CD4-positive, alpha-beta memory T cell (primary cell): ENCODE measurements at regions of chr7 and their contacts with region 1.

Region 1: DNA sequence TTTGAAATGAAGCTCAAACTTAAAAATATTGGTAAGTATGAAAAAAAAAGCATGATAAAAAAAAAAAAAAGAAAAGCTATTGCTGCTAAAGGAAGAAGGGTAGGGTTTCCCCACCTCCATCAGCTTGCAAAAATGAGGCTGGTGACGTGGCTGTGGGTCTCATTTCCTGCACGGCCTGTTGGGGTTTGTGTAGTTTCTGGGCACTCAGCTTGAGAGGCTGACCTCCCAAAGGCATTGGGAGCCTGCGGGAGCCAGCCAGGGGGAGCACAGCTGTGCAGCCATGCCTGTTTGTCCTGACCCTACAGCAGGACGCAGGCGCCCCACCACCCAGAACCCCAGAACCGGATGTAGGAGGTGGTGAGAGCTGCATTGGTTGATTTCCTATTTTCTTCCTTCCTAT is 48.8 kb upstream of the CARD11 start:
- DNase-seq: peak; percentile 78 to 91 (median 82)
- H3K4me3 ChIP-seq: no peak overlapping the region
- H3K4me3 Mint-ChIP-seq: peak overlapping the region; percentile 38 to 80 (median 71)
- H3K27ac ChIP-seq: peak overlapping the region; percentile 70
- H3K27ac Mint-ChIP-seq: peak overlapping the region; percentile 92 to 97 (median 95)
- H3K4me1 ChIP-seq: peaks cover 79% of the 10 kb centered on the region
- H3K4me1 Mint-ChIP-seq: peaks cover 47 to 86% (median 66%) of the 10 kb centered on the region in 4 donors
- H3K27me3 ChIP-seq: no peaks in the 10 kb centered on the region
- H3K27me3 Mint-ChIP-seq: no peaks in the 10 kb centered on the region

Region 2: DNA sequence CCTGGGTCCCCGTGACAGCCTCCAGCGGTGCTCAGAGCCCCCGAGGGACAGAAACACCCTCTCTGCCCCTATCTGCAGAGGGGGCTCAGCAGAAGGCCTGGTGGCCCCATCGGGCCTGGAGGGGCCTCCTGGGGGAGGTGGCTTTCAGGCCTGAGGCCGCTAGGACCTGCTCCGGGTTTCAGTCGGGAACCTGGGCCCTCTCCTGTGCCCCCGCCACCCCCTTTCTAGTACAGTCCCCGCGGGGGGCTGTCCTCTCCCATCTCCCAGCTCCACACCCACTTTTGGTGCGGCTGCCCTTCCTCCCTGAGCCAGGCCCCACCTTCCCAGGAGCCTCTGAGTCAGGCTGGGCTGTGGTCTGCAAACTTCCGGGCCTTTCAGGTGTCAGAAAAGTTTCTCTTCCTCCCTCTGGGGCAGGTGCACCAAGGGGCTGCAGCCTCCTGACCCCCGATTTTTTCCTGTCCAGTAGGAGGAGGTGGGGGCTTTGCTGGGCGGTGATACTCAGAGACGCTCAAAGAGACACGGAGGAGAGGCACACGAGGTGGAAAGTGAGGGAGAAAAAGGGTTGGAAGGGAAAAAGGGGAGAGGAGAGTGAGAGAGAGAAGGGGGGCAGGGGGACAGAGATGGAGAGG is 49.5 kb before region 1 on chr7:
- CTCF ChIA-PET with region 1: interaction called, 5 read pairs
- POLR2A ChIA-PET with region 1: interaction called, 17 read pairs
- intact Hi-C with region 1: loop called (anchors 1 kb)
- DNase-seq: peak; percentile 55 to 87 (median 64)
- H3K4me3 ChIP-seq: peak overlapping the region; percentile 66 to 84
- H3K4me3 Mint-ChIP-seq: peak overlapping the region; percentile 92 to 97 (median 96)
- H3K27ac ChIP-seq: peak overlapping the region; percentile 93
- H3K27ac Mint-ChIP-seq: peak overlapping the region; percentile 90 to 97 (median 95)
- H3K4me1 ChIP-seq: peaks cover 60% of the 10 kb centered on the region
- H3K4me1 Mint-ChIP-seq: peaks cover 36 to 72% (median 50%) of the 10 kb centered on the region in 4 donors
- H3K27me3 ChIP-seq: no peaks in the 10 kb centered on the region
- H3K27me3 Mint-ChIP-seq: no peaks in the 10 kb centered on the region

Region 3: DNA sequence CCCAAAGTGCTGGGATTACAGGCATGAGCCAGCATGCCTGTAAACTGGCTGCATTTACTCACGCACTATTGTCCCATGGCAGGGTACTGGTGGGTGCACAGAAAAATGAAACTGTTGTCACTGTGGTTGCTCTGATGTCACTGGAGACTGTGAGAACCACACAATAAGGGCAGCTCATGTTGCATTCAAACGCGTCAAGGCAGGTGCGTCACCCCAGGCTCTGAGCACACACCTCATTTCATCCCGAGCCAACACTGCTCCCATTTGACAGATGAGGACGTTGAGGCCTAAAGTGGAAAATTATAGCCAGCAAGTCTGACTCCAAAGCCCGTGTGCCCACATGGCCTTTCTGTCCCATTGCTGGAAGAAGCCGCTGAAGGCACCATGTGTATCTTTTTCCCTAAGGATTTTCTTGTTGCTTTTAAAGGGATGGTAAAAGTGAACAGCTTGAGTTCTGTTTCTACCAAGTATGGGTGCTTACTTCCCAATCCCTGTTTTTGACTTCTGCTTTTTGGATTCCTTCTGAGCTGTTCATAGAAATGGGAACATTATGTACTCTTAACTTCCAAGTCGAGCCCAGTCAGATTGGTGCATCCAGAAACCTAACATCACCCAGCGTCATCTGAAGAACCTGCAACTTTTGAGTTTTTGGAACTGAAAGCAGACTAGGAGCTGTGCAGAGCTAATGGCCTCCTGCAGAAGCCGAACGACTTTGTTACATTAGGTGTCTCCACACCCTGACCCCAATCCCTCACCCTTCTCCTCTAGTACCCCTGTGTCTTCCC is 11.3 kb after region 1 on chr7:
- CTCF ChIA-PET with region 1: interaction called, 12 read pairs
- POLR2A ChIA-PET with region 1: interaction called, 6 read pairs
- intact Hi-C with region 1: no loop called
- DNase-seq: no peak
- H3K4me3 ChIP-seq: no peak overlapping the region
- H3K4me3 Mint-ChIP-seq: no peak overlapping the region
- H3K27ac ChIP-seq: no peak overlapping the region
- H3K27ac Mint-ChIP-seq: no peak overlapping the region
- H3K4me1 ChIP-seq: peaks cover 24% of the 10 kb centered on the region
- H3K4me1 Mint-ChIP-seq: peaks cover 15 to 64% (median 45%) of the 10 kb centered on the region in 4 donors
- H3K27me3 ChIP-seq: no peaks in the 10 kb centered on the region
- H3K27me3 Mint-ChIP-seq: no peaks in the 10 kb centered on the region

Region 4: DNA sequence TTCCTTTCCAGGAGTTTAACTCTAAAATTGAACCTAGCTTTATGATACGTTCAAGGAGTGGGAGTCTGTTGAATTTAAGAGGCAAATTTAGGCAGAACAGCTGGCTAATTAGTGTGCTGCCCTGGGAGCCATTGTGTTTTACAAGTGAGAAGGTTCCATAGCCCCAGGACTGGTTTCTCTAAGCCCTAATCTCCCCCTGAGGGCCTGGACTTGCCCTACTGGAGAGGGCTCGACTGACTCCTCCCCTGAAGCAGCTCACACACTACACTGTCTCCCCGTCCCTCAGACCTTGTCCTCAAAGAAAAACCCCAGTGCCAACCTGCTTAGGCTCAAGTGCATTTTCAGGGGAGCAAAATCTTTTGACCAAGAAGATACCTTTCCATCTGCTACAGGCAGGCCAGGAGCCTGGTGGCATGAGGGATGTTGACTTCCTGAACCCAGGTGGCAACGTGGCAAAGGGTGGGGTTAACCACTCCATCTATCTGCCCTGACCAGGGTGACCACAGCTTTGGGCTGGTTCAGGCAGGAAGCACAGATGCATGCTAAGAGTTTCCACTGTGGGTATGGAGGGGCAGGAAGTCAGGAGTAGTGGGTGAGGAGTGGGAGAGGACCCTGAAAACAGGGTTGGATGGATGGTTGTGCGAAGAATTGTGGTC is 20.1 kb after region 1 on chr7:
- CTCF ChIA-PET with region 1: interaction called, 10 read pairs
- POLR2A ChIA-PET with region 1: interaction called, 46 read pairs
- intact Hi-C with region 1: loop called (anchors 2 kb)
- DNase-seq: peak in 2 of 5 donors; percentile 17 to 59
- H3K4me3 ChIP-seq: no peak overlapping the region
- H3K4me3 Mint-ChIP-seq: peak overlapping the region in 7 of 8 donors; percentile 10 to 74 (median 49)
- H3K27ac ChIP-seq: peak overlapping the region; percentile 6
- H3K27ac Mint-ChIP-seq: peak overlapping the region; percentile 3 to 92 (median 62)
- H3K4me1 ChIP-seq: peaks cover 56% of the 10 kb centered on the region
- H3K4me1 Mint-ChIP-seq: peaks cover 52 to 97% (median 65%) of the 10 kb centered on the region in 4 donors
- H3K27me3 ChIP-seq: no peaks in the 10 kb centered on the region
- H3K27me3 Mint-ChIP-seq: no peaks in the 10 kb centered on the region

Region 5: GRCh38 chr7:3117488-3118231 is 25.2 kb after region 1 on chr7:
- CTCF ChIA-PET with region 1: interaction called, 10 read pairs
- POLR2A ChIA-PET with region 1: interaction called, 46 read pairs
- intact Hi-C with region 1: loop called (anchors 2 kb)
- DNase-seq: peak in 3 of 5 donors; percentile 13 to 42 (median 33)
- H3K4me3 ChIP-seq: peak overlapping the region in 1 of 2 donors; percentile 22
- H3K4me3 Mint-ChIP-seq: peak overlapping the region in 7 of 8 donors; percentile 83 to 98 (median 90)
- H3K27ac ChIP-seq: no peak overlapping the region
- H3K27ac Mint-ChIP-seq: peak overlapping the region in 6 of 7 donors; percentile 84 to 96 (median 90)
- H3K4me1 ChIP-seq: peaks cover 64% of the 10 kb centered on the region
- H3K4me1 Mint-ChIP-seq: peaks cover 43 to 88% (median 58%) of the 10 kb centered on the region in 4 donors
- H3K27me3 ChIP-seq: no peaks in the 10 kb centered on the region
- H3K27me3 Mint-ChIP-seq: peaks cover 0 to 2% of the 10 kb centered on the region in 2 donors

Region 6: GRCh38 chr7:3154912-3155494 is 62.5 kb after region 1 on chr7:
- CTCF ChIA-PET with region 1: interaction called, 50 read pairs
- POLR2A ChIA-PET with region 1: no interaction called
- intact Hi-C with region 1: loop called (anchors 2 kb)
- DNase-seq: peak; percentile 64 to 74 (median 66)
- H3K4me3 ChIP-seq: no peak overlapping the region
- H3K4me3 Mint-ChIP-seq: no peak overlapping the region
- H3K27ac ChIP-seq: no peak overlapping the region
- H3K27ac Mint-ChIP-seq: peak overlapping the region in 2 of 7 donors; percentile 1 to 13
- H3K4me1 ChIP-seq: no peaks in the 10 kb centered on the region
- H3K4me1 Mint-ChIP-seq: peaks cover 6 to 18% (median 8%) of the 10 kb centered on the region in 4 donors
- H3K27me3 ChIP-seq: no peaks in the 10 kb centered on the region
- H3K27me3 Mint-ChIP-seq: peaks cover 0 to 1% of the 10 kb centered on the region in 2 donors

Region 7: GRCh38 chr7:3187444-3188040 is 95.1 kb after region 1 on chr7:
- CTCF ChIA-PET with region 1: no interaction called
- POLR2A ChIA-PET with region 1: no interaction called
- intact Hi-C with region 1: no loop called
- DNase-seq: no peak
- H3K4me3 ChIP-seq: no peak overlapping the region
- H3K4me3 Mint-ChIP-seq: no peak overlapping the region
- H3K27ac ChIP-seq: no peak overlapping the region
- H3K27ac Mint-ChIP-seq: no peak overlapping the region
- H3K4me1 ChIP-seq: no peaks in the 10 kb centered on the region
- H3K4me1 Mint-ChIP-seq: no peaks in the 10 kb centered on the region
- H3K27me3 ChIP-seq: no peaks in the 10 kb centered on the region
- H3K27me3 Mint-ChIP-seq: peaks cover 0 to 3% of the 10 kb centered on the region in 2 donors